ENCODE measurements at regions of chr4 and their contacts with region 1.

Region 1: DNA sequence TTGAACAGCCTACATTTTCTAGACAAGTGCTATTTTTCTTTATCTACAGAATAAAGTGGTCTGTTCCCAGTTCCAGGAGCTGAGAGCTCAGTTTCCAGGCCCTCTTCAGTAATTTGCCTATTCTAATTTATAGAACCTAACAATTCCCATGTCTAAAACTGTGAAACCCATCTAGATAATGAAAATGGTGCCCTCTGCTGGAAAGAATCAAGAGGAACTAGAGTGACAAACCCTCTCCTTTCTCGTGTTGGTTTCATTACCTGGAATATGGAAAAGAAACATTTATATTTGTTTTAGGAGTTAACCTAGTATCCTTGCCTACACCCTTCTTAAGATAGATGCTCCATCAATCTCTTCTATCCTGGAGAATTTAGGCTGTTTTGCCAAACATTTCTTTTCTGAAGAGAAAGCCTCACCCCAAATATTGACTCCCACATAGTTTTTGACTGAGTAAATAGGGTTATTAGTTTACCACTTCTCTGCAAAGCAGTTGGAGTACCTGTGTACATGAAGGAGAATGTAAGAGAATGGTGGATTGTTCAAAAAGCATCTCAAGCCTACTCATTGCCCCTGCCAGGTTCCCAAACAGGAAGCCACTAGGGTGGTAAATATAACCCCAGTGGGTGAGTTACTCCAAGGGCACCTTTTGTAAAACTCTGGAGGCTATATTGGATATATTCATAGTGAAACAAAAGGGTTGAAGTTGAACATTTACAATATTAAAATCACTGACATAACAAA is 121.6 kb downstream of the RASL11B start:
- DNase-seq: peak; percentile 67
- H3K4me3 ChIP-seq: no peak overlapping the region
- H3K27ac ChIP-seq: no peak overlapping the region
- H3K4me1 ChIP-seq: no peaks in the 10 kb centered on the region
- CTCF ChIP-seq: peak; percentile 85

Region 2: DNA sequence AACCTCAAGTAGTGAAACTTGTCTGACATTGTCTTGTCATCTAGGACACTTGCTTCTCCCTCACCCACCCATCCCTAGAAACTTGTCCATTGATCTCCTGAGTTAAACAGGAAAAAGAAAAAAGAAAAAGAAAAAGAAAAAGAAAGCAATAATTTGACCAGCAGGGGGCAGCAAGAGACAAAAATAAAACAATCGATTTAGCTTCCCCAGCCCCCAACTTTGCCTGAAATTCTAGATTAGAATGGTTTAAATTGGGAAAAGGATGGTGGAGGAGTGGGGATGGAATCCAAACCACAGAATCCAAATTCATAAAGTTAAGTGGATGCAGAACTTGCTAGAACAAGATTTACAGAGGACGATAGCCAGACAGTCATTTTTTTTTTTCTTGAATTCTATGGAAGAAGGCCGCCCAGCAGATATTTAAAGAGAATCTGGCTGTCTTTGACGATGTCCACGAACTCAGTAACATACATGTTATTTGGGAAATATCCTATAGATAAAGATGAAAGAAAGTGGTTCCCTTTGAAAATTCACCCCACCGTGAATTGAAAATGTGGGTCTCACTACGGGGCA is 607.5 kb before region 1 on chr4:
- CTCF ChIA-PET with region 1: no interaction called
- POLR2A ChIA-PET with region 1: no interaction called
- intact Hi-C with region 1: loop called (anchors 1 kb)
- DNase-seq: peak; percentile 48
- H3K4me3 ChIP-seq: no peak overlapping the region
- H3K27ac ChIP-seq: no peak overlapping the region
- H3K4me1 ChIP-seq: no peaks in the 10 kb centered on the region
- CTCF ChIP-seq: peak; percentile 93

Region 3: GRCh38 chr4:52545099-52546069 is 438.3 kb before region 1 on chr4:
- CTCF ChIA-PET with region 1: no interaction called
- POLR2A ChIA-PET with region 1: no interaction called
- intact Hi-C with region 1: loop called (anchors 2 kb)
- DNase-seq: peak; percentile 41
- H3K4me3 ChIP-seq: no peak overlapping the region
- H3K27ac ChIP-seq: no peak overlapping the region
- H3K4me1 ChIP-seq: no peaks in the 10 kb centered on the region
- CTCF ChIP-seq: peak; percentile 94

Region 4: DNA sequence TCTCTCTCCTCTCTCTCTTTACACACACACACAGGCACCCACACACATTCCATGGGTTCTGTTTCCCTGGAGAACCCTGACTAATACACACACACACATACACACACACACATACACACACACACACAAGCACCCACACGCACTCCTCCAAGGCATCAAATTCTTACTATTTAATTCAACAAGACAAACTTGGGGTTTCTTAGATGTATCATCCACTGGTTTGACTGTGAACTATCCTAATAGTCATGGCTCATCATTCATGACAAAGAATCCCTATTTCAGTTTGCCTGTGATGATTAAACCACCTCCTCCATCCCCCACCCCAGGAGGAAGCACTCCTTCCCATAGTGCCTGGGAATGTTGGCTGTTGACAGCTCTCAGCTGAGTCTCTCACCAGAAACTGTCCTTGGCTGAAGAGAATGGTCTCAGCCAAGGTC is 422.9 kb before region 1 on chr4:
- CTCF ChIA-PET with region 1: no interaction called
- POLR2A ChIA-PET with region 1: no interaction called
- intact Hi-C with region 1: no loop called
- DNase-seq: no peak
- H3K4me3 ChIP-seq: no peak overlapping the region
- H3K27ac ChIP-seq: no peak overlapping the region
- H3K4me1 ChIP-seq: no peaks in the 10 kb centered on the region
- CTCF ChIP-seq: no peak

Region 5: GRCh38 chr4:52684896-52685295 is 298.8 kb before region 1 on chr4:
- CTCF ChIA-PET with region 1: no interaction called
- POLR2A ChIA-PET with region 1: no interaction called
- intact Hi-C with region 1: loop called (anchors 10 kb)
- DNase-seq: no peak
- H3K4me3 ChIP-seq: no peak overlapping the region
- H3K27ac ChIP-seq: no peak overlapping the region
- H3K4me1 ChIP-seq: no peaks in the 10 kb centered on the region
- CTCF ChIP-seq: no peak

Region 6: DNA sequence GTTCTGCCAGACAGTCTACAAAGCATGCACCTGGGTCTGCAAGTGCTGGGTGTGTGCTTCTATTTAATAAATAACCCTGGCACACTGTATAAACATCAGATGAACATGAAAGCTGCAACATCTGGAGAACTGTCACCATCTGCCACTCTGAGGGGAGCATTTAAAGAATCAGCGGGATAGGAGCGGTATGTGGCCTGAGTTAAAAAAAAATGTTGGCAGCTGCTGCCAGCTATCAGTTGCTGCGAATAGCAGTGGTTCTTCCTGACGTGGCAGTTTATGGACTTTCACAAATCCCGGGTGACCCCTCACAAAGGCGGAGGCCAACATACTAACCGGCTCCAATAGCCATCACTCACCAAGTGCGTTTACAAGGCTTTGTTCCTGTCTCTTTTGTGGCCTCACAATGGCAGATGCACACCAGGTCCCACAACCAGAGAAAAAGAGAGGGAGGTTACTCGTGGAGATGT is 26.5 kb before region 1 on chr4:
- CTCF ChIA-PET with region 1: no interaction called
- POLR2A ChIA-PET with region 1: no interaction called
- intact Hi-C with region 1: no loop called
- DNase-seq: no peak
- H3K4me3 ChIP-seq: no peak overlapping the region
- H3K27ac ChIP-seq: no peak overlapping the region
- H3K4me1 ChIP-seq: no peaks in the 10 kb centered on the region
- CTCF ChIP-seq: no peak

Region 7: DNA sequence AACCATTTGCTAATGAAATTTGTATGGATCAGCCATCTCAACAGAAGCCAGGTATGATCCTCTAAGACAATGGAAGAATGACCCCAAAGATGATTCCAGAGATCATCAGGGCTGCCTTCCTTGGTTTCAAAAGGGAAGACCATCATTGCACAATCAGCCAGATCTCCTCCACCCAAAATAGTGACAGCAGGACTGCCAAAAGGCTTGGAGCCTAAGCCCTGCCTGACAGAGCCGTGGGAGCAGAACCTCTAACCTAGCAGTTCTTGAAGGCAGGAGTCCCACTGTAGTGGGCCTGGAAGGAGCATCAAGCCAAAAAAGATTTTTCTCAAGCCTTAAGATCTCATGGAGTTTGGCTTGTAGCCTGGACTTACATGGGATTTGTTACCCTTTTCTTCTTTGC is 104.4 kb after region 1 on chr4:
- CTCF ChIA-PET with region 1: no interaction called
- POLR2A ChIA-PET with region 1: no interaction called
- intact Hi-C with region 1: no loop called
- DNase-seq: no peak
- H3K4me3 ChIP-seq: no peak overlapping the region
- H3K27ac ChIP-seq: no peak overlapping the region
- H3K4me1 ChIP-seq: no peaks in the 10 kb centered on the region
- CTCF ChIP-seq: no peak

Measured in OCI-LY7 (cell line).